ENCODE measurements at regions of chr11 and their contacts with region 1.

Region 1: GRCh38 chr11:94924612-94925011 is 48.7 kb downstream of the CWC15 start:
- DNase-seq: peak in 22 of 35 experiments; percentile 8 to 48 (median 24)
- ATAC-seq: peak; percentile 75 to 83 (median 77)
- H3K4me3 ChIP-seq: no peak overlapping the region
- H3K4me3 Mint-ChIP-seq: peak overlapping the region; percentile 58 to 71 (median 66)
- H3K27ac ChIP-seq: peak overlapping the region; percentile 74
- H3K27ac Mint-ChIP-seq: peak overlapping the region; percentile 97 to 99
- H3K4me1 ChIP-seq: peaks cover 44 to 53% of the 10 kb centered on the region in 2 experiments
- H3K4me1 Mint-ChIP-seq: peaks cover 54 to 76% (median 58%) of the 10 kb centered on the region in 3 donors
- H3K27me3 ChIP-seq: peaks cover 0 to 4% of the 10 kb centered on the region in 2 experiments
- H3K27me3 Mint-ChIP-seq: no peaks in the 10 kb centered on the region

Region 2: GRCh38 chr11:95266751-95267374 is 342.3 kb after region 1 on chr11:
- CTCF ChIA-PET with region 1: no interaction called
- POLR2A ChIA-PET with region 1: interaction called in 1 of 2 experiments, 10 read pairs
- DNase-seq: no peak
- ATAC-seq: no peak
- H3K4me3 ChIP-seq: no peak overlapping the region
- H3K4me3 Mint-ChIP-seq: no peak overlapping the region
- H3K27ac ChIP-seq: no peak overlapping the region
- H3K27ac Mint-ChIP-seq: no peak overlapping the region
- H3K4me1 ChIP-seq: peaks cover 0 to 14% of the 10 kb centered on the region in 2 experiments
- H3K4me1 Mint-ChIP-seq: peaks cover 7 to 13% (median 13%) of the 10 kb centered on the region in 3 donors
- H3K27me3 ChIP-seq: no peaks in the 10 kb centered on the region
- H3K27me3 Mint-ChIP-seq: no peaks in the 10 kb centered on the region

Measured in T-cell (primary cell).